ENCODE measurements at regions of chr5 and their contacts with region 1.

Region 1: GRCh38 chr5:37153661-37154060 is 95.5 kb downstream of the CPLANE1 start:
- DNase-seq: no peak
- H3K4me3 ChIP-seq: no peak overlapping the region
- H3K27ac ChIP-seq: no peak overlapping the region
- H3K4me1 ChIP-seq: no peaks in the 10 kb centered on the region
- H3K27me3 ChIP-seq: no peaks in the 10 kb centered on the region
- CTCF ChIP-seq: no peak

Region 2: DNA sequence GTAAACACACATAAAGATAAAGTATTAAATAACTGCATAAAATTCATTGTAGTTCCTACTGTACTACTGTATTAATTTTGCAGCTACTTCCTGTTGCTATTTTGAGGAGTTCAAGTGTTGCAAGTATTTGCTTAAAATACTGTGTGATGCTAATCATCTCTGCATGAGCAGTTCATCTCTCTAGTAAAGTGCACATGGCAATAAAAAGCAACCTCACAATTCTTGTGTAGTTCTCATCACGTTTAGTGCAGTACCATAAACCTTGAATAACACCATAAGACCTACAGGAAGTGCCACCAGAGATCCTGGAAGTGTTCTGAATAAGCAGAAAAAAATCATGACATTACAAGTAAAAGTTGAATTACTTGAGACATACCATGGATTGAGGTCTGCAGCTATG is 60.9 kb after region 1 on chr5:
- CTCF ChIA-PET with region 1: interaction called, 10 read pairs
- POLR2A ChIA-PET with region 1: no interaction called
- intact Hi-C with region 1: no loop called
- DNase-seq: no peak
- H3K4me3 ChIP-seq: no peak overlapping the region
- H3K27ac ChIP-seq: no peak overlapping the region
- H3K4me1 ChIP-seq: 0 out of 2 replicates have a peak, but pooled peaks cover 3% of the 10 kb centered on the region
- H3K27me3 ChIP-seq: no peaks in the 10 kb centered on the region
- CTCF ChIP-seq: no peak

Measured in PC-9 (cell line).